Mammary epithelial cell (primary cell): ENCODE measurements at regions of chr15 and their contacts with region 1.

Region 1: DNA sequence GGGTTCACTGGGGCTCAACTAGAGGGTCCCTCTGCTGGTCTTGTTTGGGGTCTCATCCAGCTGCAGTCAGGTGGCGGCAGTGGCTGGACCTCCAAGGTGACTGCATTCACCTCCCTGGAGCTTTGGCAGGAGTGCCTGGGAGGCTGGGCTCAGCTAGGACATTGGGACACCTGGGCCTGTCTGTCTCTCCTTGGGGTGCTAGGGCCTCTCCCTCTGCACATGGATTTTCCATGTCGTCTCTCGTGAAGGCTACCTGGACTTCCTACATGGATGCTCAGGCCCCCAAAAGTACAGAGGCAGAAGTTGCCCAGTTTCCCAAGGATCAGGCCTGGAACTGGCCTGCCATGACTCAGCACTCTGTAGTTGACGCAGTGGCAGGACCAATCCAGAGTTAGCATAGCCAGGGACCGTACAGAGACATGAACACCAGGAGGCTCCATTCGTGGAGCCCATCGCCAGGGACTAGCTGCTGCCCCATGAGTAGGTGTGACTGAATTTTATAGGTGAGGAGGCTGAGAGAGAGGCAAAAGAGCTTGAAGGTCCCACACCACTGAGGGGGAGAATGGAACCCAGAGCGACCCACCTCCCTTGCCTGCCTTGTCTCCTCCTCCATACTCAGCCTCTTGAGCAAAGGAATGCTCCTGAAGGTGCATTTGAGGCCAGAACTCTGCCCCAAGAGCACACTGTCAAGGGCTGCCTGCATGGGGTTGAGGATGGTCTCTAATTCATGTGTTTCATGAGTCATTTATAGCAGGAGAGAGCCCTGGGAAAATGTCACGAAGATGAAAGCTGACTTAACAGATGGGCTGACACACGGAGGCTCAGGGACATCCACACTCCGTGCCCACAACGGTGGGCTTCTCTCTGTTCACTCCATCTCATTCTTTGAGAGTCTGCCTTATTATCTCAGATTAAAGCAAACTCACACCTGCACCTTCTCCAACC is 13.0 kb upstream of the ALDH1A3 start:
- DNase-seq: no peak
- H3K4me3 ChIP-seq: no peak overlapping the region
- H3K27ac ChIP-seq: no peak overlapping the region
- H3K4me1 ChIP-seq: peaks cover 3% of the 10 kb centered on the region
- H3K27me3 ChIP-seq: no peaks in the 10 kb centered on the region
- CTCF ChIP-seq: no peak

Region 2: GRCh38 chr15:100738614-100739013 is 128.0 kb before region 1 on chr15:
- CTCF ChIA-PET with region 1: interaction called, 25 read pairs
- dilution Hi-C with region 1: no loop called
- in situ Hi-C with region 1: no loop called
- intact Hi-C with region 1: no loop called
- DNase-seq: no peak
- H3K4me3 ChIP-seq: no peak overlapping the region
- H3K27ac ChIP-seq: no peak overlapping the region
- H3K4me1 ChIP-seq: peaks cover 2% of the 10 kb centered on the region
- H3K27me3 ChIP-seq: no peaks in the 10 kb centered on the region
- CTCF ChIP-seq: no peak

Region 3: DNA sequence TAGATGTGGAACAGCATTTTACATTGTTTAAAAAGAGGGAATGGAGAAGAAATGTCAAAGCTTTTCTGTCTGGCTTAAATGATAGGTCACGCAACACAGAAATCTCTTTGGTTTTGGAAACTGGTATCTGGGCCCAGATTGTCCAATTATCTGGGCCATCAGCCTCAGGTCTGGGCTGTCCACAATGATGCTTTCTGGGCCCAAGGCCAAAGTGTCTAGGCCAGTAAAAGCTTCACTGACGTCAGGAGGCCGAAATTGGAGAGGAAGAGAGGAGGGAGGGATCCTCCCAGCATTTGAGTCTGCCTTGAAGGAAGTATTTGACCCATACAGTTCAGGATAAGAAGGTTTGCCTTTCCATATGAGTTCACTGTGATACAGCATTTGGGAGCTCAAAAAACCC is 47.7 kb before region 1 on chr15:
- CTCF ChIA-PET with region 1: no interaction called
- dilution Hi-C with region 1: no loop called
- in situ Hi-C with region 1: no loop called
- intact Hi-C with region 1: no loop called
- DNase-seq: no peak
- H3K4me3 ChIP-seq: no peak overlapping the region
- H3K27ac ChIP-seq: no peak overlapping the region
- H3K4me1 ChIP-seq: no peaks in the 10 kb centered on the region
- H3K27me3 ChIP-seq: no peaks in the 10 kb centered on the region
- CTCF ChIP-seq: no peak